ENCODE measurements at regions of chr20 and their contacts with region 1.

Region 1: DNA sequence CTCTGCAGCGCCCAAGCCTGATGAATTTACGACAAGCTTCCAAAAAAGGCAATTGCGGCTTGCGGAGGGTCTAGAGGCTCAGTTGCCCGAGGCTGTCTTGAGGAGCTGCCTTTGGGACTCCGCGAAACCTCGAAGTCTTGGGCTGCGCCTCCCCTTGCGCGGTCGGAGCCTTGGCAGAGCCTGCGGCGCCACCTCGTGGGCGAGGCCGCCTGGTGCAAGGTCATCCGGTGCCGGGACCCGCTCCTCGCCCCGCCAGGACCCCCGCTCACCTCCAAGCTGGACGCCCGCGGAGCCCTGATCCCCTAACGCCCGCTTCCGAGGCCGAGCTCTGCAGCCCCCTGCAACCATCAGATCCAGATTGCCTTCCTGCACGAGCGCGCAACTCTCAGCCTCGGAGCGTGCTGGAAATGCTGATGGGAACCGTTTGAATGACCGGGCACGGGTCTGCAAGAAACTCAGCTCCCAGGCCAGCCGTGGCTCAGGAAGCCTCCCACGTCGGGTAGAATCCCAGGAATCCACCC is 14.9 kb upstream of the FAM210B start:
- H3K4me3 Mint-ChIP-seq: peak overlapping the region; percentile 46
- H3K27ac Mint-ChIP-seq: no peak overlapping the region
- H3K4me1 Mint-ChIP-seq: peaks cover 14% of the 10 kb centered on the region
- H3K27me3 Mint-ChIP-seq: peaks cover 69% of the 10 kb centered on the region

Region 2: GRCh38 chr20:54668271-54669039 is 1675.5 kb before region 1 on chr20:
- intact Hi-C with region 1: loop called (anchors 5 kb)
- H3K4me3 Mint-ChIP-seq: no peak overlapping the region
- H3K27ac Mint-ChIP-seq: no peak overlapping the region
- H3K4me1 Mint-ChIP-seq: peaks cover 6% of the 10 kb centered on the region
- H3K27me3 Mint-ChIP-seq: peaks cover 10% of the 10 kb centered on the region

Region 3: GRCh38 chr20:54680872-54681619 is 1662.9 kb before region 1 on chr20:
- intact Hi-C with region 1: loop called (anchors 5 kb)
- H3K4me3 Mint-ChIP-seq: no peak overlapping the region
- H3K27ac Mint-ChIP-seq: no peak overlapping the region
- H3K4me1 Mint-ChIP-seq: no peaks in the 10 kb centered on the region
- H3K27me3 Mint-ChIP-seq: peaks cover 3% of the 10 kb centered on the region

Region 4: GRCh38 chr20:56306912-56307311 is 37.0 kb before region 1 on chr20:
- intact Hi-C with region 1: no loop called
- H3K4me3 Mint-ChIP-seq: no peak overlapping the region
- H3K27ac Mint-ChIP-seq: no peak overlapping the region
- H3K4me1 Mint-ChIP-seq: no peaks in the 10 kb centered on the region
- H3K27me3 Mint-ChIP-seq: peaks cover 3% of the 10 kb centered on the region

Measured in dendritic cell treated with granulocyte-macrophage colony-stimulating factor and Interleukin-4, amounts not matched to agents 40 ng/mL and 50 ng/mL, for 4 days (primary cell).